ENCODE measurements at regions of chr10 and their contacts with region 1.

Region 1: GRCh38 chr10:24642622-24643417 is 80.9 kb downstream of the ARHGAP21 start:
- DNase-seq: peak; percentile 71
- ATAC-seq: peak; percentile 91
- H3K4me3 ChIP-seq: no peak overlapping the region
- H3K27ac ChIP-seq: no peak overlapping the region
- H3K4me1 ChIP-seq: peaks cover 16 to 29% of the 10 kb centered on the region in 2 experiments
- H3K27me3 ChIP-seq: no peaks in the 10 kb centered on the region
- CTCF ChIP-seq: peak; percentile 67 to 81 (median 79)
- POLR2A ChIP-seq: no peak
- RAD21 ChIP-seq: peak; percentile 91

Region 2: DNA sequence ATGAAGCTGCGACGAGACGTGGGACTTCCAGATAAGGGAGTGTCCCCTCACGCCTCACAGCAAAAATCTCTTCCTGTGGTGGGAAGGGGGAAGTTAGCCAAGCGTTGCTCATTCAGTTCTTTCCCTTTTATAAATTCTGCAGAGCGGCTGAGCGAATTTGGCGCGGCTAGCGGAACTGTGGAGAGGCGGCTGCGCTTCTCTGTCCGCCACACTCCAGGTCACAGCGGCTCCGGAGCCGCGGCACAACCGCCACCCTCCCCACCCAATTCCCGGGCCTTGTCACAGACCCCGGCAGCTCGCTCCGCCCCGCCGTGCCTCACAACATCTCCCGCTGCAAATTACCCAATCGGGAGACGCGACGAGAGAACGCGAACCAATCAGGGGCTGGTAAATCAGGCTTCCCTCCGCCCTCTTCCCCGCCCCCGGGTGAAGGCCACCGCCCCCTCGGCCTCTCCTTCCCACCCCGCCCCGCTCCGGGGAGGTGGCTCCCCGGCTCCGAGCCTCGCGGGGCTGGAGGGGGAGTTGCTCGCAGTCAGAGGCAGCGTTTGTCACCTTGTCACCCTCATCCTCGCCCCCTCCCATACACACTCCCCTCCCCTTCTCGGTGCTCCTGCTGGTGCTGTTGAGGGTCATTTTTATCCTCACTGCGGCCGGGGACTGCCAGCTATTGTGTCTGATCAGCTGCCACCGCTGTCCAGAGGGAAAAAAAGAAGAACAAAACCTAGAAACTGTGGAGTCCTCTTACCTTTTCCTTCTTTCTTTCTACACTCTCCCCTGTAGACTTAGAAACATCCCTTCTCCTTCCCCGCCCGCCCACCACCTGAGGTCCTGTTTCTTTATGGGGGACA is 81.8 kb after region 1 on chr10:
- CTCF ChIA-PET with region 1: interaction called, 3 read pairs
- POLR2A ChIA-PET with region 1: no interaction called
- RAD21 ChIA-PET with region 1: no interaction called
- intact Hi-C with region 1: loop called (anchors 1 kb)
- DNase-seq: peak; percentile 92
- ATAC-seq: peak; percentile 85
- H3K4me3 ChIP-seq: peak overlapping the region; percentile 76 to 77
- H3K27ac ChIP-seq: peak overlapping the region; percentile 90
- H3K4me1 ChIP-seq: peaks cover 3 to 14% of the 10 kb centered on the region in 2 experiments; a peak in 3 of 4 replicates
- H3K27me3 ChIP-seq: no peaks in the 10 kb centered on the region
- CTCF ChIP-seq: no peak
- POLR2A ChIP-seq: peak; percentile 78
- RAD21 ChIP-seq: no peak

Region 3: GRCh38 chr10:24901686-24902399 is 259.0 kb after region 1 on chr10:
- CTCF ChIA-PET with region 1: no interaction called
- POLR2A ChIA-PET with region 1: no interaction called
- RAD21 ChIA-PET with region 1: no interaction called
- intact Hi-C with region 1: loop called (anchors 5 kb)
- DNase-seq: peak; percentile 92
- ATAC-seq: peak; percentile 88
- H3K4me3 ChIP-seq: peak overlapping the region in 1 of 2 experiments; percentile 19; a peak in 2 of 4 replicates
- H3K27ac ChIP-seq: peak overlapping the region; percentile 64
- H3K4me1 ChIP-seq: peaks cover 29 to 45% of the 10 kb centered on the region in 2 experiments
- H3K27me3 ChIP-seq: no peaks in the 10 kb centered on the region
- CTCF ChIP-seq: no peak
- POLR2A ChIP-seq: no peak
- RAD21 ChIP-seq: peak; percentile 53; the same call in 1 of the 2 replicates

Region 4: DNA sequence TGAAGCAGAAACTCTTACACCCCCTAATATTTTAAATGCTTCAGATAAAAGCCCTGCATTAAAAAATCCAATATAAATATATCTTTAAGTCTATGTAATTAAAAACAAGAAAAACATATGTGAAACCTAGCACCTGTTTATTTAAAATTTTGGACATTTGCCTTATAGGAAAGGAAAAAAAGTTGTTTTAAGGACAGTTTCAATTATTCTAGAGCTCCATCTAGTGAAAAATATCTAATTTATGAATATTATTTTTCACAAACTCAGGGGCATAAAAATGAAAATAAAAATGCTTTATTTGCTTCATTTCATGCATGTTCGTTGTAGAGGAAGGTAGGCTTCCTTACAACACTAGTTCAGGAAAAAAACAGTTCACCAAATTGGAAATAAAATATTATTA is 347.0 kb after region 1 on chr10:
- CTCF ChIA-PET with region 1: interaction called, 11 read pairs
- POLR2A ChIA-PET with region 1: no interaction called
- RAD21 ChIA-PET with region 1: interaction called in 1 of 2 experiments, 3 read pairs
- intact Hi-C with region 1: loop called (anchors 1 kb)
- DNase-seq: no peak
- ATAC-seq: no peak
- H3K4me3 ChIP-seq: no peak overlapping the region
- H3K27ac ChIP-seq: no peak overlapping the region
- H3K4me1 ChIP-seq: no peaks in the 10 kb centered on the region
- H3K27me3 ChIP-seq: no peaks in the 10 kb centered on the region
- CTCF ChIP-seq: peak in 2 of 3 experiments; percentile 32 to 60; a peak in 2 of 6 replicates
- POLR2A ChIP-seq: no peak
- RAD21 ChIP-seq: peak; percentile 70

Region 5: GRCh38 chr10:25226775-25227682 is 584.2 kb after region 1 on chr10:
- CTCF ChIA-PET with region 1: interaction called, 3 read pairs
- POLR2A ChIA-PET with region 1: no interaction called
- RAD21 ChIA-PET with region 1: no interaction called
- intact Hi-C with region 1: loop called (anchors 5 kb)
- DNase-seq: peak; percentile 48
- ATAC-seq: peak; percentile 88
- H3K4me3 ChIP-seq: no peak overlapping the region
- H3K27ac ChIP-seq: no peak overlapping the region
- H3K4me1 ChIP-seq: no peaks in the 10 kb centered on the region
- H3K27me3 ChIP-seq: no peaks in the 10 kb centered on the region
- CTCF ChIP-seq: peak; percentile 67 to 83 (median 78)
- POLR2A ChIP-seq: no peak
- RAD21 ChIP-seq: peak; percentile 78

Measured in HCT116 (cell line).